Gastrocnemius medialis (tissue), 4 donors: ENCODE measurements at regions of chr9 and their contacts with region 1.

Region 1: GRCh38 chr9:20152151-20152725 is 363.4 kb upstream of the SLC24A2 start:
- DNase-seq: no peak
- ATAC-seq: no peak
- H3K4me3 ChIP-seq: no peak overlapping the region
- H3K27ac ChIP-seq: no peak overlapping the region
- H3K4me1 ChIP-seq: no peaks in the 10 kb centered on the region
- H3K27me3 ChIP-seq: no peaks in the 10 kb centered on the region
- CTCF ChIP-seq: no peak
- POLR2A ChIP-seq: no peak

Region 2: DNA sequence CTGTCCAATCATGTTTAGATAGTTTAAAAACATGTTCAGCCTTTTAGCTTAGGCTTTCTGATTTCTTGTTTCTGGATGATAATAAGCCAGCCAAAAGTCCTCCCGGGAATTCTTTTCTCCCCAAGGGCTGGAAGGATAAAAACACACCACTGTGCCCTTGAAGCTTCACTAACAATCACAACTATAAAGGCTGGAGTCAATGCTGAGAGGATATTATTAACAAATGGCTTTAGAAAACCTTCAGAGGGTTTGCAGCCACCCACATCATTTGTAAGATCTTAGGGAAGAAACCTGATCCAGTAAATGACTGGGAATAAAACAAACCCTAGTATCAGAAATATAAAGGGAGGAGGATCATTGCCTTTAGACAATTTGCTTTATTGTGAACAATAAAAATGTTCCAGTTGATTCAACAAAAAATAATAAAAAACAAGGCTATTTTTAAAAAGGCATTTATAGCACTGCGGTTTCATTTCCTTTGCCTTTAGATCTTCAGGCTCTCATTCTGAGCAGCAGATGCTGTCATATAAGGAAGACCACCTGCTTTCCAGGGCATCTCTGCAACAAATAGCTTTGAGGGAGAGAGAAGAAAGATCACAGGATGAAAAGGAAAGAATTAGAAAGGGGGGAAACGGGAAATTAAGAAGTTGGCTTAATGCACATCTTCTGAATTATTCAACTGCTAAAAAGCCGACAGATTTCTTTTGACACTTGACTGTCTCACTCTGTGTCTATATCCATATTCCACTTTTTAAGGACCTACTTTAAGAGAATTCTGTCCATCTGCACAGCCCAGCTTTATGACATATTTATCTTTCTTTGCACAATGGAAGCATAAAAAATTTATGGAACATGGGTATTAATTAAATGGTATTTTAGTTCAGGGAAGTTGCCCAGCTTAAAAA is 86.2 kb before region 1 on chr9:
- in situ Hi-C with region 1: loop called in 1 of 4 experiments (anchors 25 kb)
- intact Hi-C with region 1: no loop called
- DNase-seq: no peak
- ATAC-seq: no peak
- H3K4me3 ChIP-seq: no peak overlapping the region
- H3K27ac ChIP-seq: no peak overlapping the region
- H3K4me1 ChIP-seq: no peaks in the 10 kb centered on the region
- H3K27me3 ChIP-seq: no peaks in the 10 kb centered on the region
- CTCF ChIP-seq: no peak
- POLR2A ChIP-seq: no peak

Region 3: DNA sequence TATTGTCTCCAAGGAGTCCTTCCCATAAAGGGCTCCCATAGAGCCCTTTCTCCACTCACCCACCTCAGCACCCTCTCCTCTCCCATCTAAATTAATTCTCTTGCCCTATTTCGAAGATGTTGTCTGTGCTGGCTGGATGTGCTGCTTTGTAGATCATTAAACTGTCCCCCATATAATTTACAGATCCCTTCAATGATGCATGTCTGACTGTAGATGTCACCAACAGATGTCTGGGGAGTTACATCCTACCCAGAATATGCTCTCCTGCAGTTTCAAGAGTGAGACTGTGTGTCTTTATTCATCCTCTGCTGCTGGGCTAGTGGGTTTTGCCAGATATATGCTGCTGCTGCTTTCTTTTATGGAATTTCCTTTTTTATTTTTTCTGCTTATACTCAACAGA is 118.9 kb after region 1 on chr9:
- in situ Hi-C with region 1: loop called in 1 of 4 experiments (anchors 25 kb)
- intact Hi-C with region 1: no loop called
- DNase-seq: no peak
- ATAC-seq: no peak
- H3K4me3 ChIP-seq: no peak overlapping the region
- H3K27ac ChIP-seq: no peak overlapping the region
- H3K4me1 ChIP-seq: no peaks in the 10 kb centered on the region
- H3K27me3 ChIP-seq: no peaks in the 10 kb centered on the region
- CTCF ChIP-seq: no peak
- POLR2A ChIP-seq: no peak